ENCODE measurements at regions of chr6 and their contacts with region 1.

Region 1: DNA sequence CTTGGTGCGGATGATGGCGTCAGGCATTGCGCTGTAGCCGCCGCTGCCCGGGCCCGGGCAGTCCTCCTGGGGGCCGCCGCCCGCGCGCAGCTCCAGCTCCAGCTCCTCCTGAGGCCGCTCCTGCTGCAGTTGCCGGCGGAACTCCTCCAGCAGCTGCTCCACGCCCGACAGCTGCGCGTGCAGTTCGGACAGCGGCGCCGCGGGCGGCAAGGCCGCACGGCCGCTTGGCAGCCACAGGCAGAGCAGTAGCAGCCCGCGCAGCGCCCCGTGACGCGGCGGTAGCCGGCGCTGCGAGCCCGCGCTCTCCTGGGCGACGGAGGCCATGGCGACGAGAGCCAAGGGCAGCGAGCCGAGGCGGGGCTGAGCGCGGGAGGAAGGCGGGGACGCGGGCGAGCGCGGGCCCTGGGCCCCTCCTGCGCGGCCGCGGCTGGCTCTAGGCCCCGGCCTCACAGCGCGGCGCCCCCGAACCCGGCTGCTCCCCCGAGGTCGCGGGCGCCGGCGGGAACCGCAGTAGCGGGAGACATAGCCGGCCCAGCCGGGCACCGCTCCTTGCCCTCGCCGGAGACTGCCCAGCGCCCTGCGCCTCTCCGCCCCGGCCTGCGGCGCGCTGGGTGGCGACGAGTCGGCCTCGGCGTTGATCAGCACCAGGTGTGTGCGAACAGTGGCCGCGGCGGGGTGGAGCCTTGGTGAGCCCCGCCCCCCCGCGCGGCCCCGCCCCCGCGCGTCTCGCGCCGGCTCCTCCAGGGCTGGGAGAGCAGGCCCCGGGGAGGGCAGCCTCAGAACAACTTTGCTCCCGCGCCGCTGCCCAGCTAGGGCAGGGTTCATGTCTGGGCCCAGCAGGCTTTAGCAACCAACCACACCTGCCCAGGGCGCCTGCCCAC is at the start of gene LRP11:
- DNase-seq: peak; percentile 77 to 92 (median 87)
- H3K4me3 ChIP-seq: peak within 1 kb of the TSS; percentile 53 to 88 (median 75)
- H3K27ac ChIP-seq: peak within 1 kb of the TSS; percentile 73 to 98 (median 94)
- H3K27me3 ChIP-seq: no peaks in the 10 kb centered on the region
- CTCF ChIP-seq: peak in 11 of 56 donors; percentile 1 to 21 (median 8)
- total RNA-seq, gene LRP11: 36.7 to 71.1 (median 58.3) TPM

Region 2: GRCh38 chr6:149545754-149546528 is 318.0 kb before region 1 on chr6 and contains the start of gene PPIL4:
- intact Hi-C with region 1: loop called (anchors 1 to 10 kb)
- DNase-seq: peak; percentile 87 to 97 (median 95)
- H3K4me3 ChIP-seq: peak within 1 kb of the TSS; percentile 70 to 100 (median 96)
- H3K27ac ChIP-seq: peak within 1 kb of the TSS; percentile 70 to 99 (median 92)
- H3K27me3 ChIP-seq: no peaks in the 10 kb centered on the region
- CTCF ChIP-seq: peak; percentile 74 to 98 (median 92)
- total RNA-seq, gene PPIL4: 20.6 to 52.2 (median 37.6) TPM

Region 3: DNA sequence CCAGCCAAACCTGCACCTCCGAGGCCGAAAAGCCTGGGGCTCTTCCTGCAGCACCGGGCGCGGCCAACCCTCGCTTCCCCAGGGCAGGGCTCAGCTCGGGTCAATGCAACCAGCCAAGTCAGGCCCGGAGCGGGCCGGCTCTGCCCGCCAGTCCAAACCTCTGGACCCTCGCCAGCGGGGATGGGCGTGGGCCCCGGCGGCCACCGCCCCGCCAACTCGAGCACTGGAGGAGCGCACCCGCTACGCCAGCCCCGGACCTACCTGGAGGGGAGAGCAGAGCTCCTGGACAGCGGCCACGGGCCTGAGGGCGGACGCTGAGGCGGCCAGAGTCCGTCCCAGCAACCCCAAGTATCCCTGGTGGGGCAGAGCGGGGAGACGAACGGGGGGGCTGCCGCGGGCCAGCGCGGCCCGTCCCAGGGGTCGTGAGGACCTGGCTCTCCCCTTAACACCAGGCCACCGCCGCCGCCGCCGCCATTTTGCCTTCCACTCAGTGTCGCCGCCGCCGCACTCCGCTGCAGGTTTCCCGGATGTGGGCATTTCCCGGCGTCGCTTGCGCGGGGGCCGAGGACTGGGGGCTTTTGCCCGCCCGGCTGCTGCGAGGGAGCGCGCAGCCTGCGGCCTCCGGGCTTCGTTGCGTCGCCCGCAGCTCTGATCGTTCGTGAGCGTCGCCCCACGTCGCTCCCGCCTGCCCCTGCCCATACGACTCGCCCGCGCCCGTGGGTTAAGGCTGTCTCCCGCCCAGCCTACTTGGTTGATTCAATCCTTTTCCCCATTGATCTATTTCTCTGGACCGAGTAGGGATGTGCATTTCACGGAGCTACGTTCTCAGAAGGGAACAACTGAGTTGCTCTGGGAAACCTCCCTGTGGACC is 146.1 kb before region 1 on chr6 and contains the start of gene LATS1:
- intact Hi-C with region 1: loop called (anchors 5 to 10 kb)
- DNase-seq: peak; percentile 78 to 94 (median 90)
- H3K4me3 ChIP-seq: peak within 1 kb of the TSS; percentile 56 to 100 (median 96)
- H3K27ac ChIP-seq: peak within 1 kb of the TSS; percentile 85 to 100 (median 97)
- H3K27me3 ChIP-seq: no peaks in the 10 kb centered on the region
- CTCF ChIP-seq: peak in 41 of 56 donors; percentile 3 to 60 (median 30)
- total RNA-seq, gene LATS1: 26.8 to 50.8 (median 36.9) TPM

Region 4: DNA sequence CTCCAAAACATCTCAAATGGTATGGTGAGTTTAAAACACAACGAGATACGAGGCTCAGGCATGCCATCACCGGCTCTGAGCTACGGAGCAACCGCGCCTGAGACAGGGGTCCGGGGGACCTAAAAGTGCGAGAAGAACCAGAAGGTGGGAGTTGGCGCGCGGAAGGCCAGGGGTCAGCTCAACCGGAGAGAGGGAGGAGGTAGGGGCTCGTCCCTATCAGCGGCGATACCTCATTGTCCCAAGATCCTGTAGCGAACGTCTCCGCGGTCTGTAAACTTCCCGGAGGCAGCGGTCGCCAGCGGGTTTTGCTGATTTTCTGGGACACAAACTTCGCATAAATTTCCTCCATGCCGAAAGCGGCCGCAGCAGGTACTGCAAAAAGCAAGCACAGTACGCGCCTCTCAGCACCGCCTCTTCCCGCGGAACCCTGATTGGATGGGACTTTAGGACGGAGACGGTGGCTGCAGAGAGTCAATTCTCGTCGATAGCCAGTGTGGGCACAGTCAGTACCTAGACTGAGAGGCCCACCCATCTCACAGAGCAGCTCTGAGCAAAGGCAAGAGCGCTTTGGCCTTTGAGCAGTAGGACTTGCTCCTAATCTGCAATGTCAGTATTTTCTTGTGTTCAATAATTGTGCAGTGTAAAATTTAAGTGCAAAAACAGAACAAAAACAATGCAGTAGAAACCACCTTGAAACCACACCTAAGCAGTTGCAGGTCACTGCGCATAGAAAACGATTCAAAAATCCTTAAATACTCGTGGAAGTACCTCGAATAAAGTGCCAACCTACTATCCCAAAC is 117.6 kb before region 1 on chr6 and contains the start of gene NUP43:
- intact Hi-C with region 1: loop called (anchors 5 to 10 kb)
- DNase-seq: peak; percentile 77 to 94 (median 92)
- H3K4me3 ChIP-seq: peak within 1 kb of the TSS; percentile 43 to 100 (median 85)
- H3K27ac ChIP-seq: peak within 1 kb of the TSS in 58 of 59 donors; percentile 18 to 92 (median 80)
- H3K27me3 ChIP-seq: no peaks in the 10 kb centered on the region
- CTCF ChIP-seq: peak; percentile 33 to 83 (median 64)
- total RNA-seq, gene NUP43: 12.9 to 41.8 (median 23.7) TPM

Region 5: GRCh38 chr6:149840345-149841075 is 23.4 kb before region 1 on chr6:
- intact Hi-C with region 1: loop called in 1 of 2 experiments (anchors 2 kb)
- DNase-seq: peak in 8 of 10 donors; percentile 40 to 79 (median 61)
- H3K4me3 ChIP-seq: no peak overlapping the region
- H3K27ac ChIP-seq: peak overlapping the region in 47 of 59 donors; percentile 2 to 85 (median 51)
- H3K27me3 ChIP-seq: no peaks in the 10 kb centered on the region
- CTCF ChIP-seq: peak in 53 of 56 donors; percentile 20 to 76 (median 56)

Measured in dorsolateral prefrontal cortex (tissue), 120 donors.